Psoas muscle (tissue), 8 donors: ENCODE measurements at regions of chr3 and their contacts with region 1.

Region 1: DNA sequence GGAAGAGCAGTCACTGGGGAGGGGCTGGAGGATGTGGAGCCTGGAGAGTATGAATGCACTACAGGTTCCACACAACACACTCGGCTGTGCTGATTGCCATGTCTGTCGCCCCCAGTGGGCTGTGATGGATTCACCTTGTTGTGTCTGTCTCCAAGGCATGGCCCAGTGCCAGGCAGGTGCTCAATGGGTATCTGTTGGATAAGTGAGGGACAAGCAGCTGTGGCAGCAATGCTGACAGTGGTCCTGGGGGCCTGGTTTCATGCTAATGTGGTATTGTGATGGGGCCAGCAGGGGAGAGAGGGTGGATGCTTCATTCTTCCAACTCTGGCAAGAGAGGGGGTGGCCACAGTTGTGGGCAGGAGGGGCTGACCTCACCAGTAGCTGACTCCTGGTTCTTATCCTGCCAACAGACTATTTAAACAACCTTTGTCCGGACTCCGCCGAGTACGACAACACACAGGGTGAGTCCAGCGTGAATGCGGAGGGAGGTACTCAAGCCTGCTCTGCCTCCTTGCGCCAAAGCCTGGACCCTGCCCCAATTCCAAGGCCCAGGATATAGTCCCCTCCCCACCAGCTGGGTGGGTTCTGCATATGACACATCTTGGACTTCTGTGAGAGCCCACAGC is 47.3 kb upstream of the NR2C2 start:
- DNase-seq: no peak
- ATAC-seq: no peak
- H3K4me3 ChIP-seq: no peak overlapping the region
- H3K27ac ChIP-seq: no peak overlapping the region
- H3K4me1 ChIP-seq: no peaks in the 10 kb centered on the region
- H3K27me3 ChIP-seq: no peaks in the 10 kb centered on the region
- CTCF ChIP-seq: no peak

Region 2: DNA sequence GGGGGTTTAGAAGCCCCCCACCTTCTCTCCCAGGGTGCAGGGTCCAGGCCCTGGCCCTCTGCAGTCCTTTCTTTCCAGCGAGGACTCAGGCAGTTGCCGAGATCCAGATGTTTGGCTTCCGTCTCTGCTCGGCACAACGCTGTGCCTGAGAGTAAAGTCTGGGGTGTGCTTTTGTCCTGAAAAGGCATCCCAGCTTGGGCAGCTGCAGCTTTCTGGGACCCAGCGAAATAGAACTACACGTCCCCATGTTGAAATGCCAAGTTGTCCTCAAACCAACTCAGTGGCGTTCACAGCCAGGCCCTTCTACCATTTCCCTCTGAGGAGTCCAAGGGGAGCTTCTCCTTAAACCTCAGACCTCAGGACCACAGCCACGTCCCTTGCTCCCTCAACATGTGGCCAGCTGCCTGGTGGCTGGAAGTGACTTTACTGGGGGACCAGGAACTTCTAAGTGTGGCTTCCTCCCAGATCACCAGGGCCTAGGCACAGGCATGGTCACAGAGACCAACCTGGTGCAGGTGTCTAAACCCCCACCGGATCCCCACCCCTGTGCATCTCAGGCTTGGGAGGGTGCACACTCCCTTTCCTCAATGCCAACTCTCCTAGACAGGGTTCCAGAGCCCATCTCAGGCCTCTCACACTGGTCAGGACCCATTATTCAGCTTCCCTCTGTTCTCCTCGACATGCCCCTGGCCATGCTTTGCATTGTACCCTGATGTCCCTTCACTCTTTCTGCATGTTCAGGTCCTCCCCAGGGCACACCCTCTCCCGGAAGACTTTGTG is 58.1 kb before region 1 on chr3:
- intact Hi-C with region 1: loop called in 1 of 2 experiments (anchors 5 kb)
- DNase-seq: no peak
- ATAC-seq: peak in 3 of 4 donors; percentile 19 to 59 (median 46)
- H3K4me3 ChIP-seq: no peak overlapping the region
- H3K27ac ChIP-seq: no peak overlapping the region
- H3K4me1 ChIP-seq: peaks cover 7% of the 10 kb centered on the region
- H3K27me3 ChIP-seq: peaks cover 0 to 4% (median 0%) of the 10 kb centered on the region in 3 donors
- CTCF ChIP-seq: no peak